Naive thymus-derived CD4-positive, alpha-beta T cell (primary cell): ENCODE measurements at regions of chr2 and their contacts with region 1.

Region 1: DNA sequence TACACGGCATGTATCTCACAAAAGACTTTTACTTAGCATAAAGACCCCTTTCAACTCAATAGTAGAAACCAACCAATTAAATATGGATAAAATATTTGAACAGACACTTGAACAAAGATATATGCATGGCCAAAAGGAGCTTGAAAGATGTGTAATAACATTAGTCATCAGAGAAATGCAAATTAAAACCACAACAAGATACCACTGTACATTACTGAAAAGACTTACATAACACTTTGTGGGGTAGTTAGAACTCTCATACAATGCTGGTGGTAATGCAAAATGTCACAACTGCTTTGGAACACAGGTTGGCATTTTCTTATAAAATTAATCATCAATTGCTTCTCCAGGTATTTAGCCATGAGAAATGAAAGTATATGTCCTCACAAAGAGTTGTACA is 60.7 kb downstream of the TTC27 start:
- DNase-seq: no peak
- ATAC-seq: peak; percentile 53
- H3K4me3 ChIP-seq: no peak overlapping the region
- H3K4me3 Mint-ChIP-seq: no peak overlapping the region
- H3K27ac ChIP-seq: no peak overlapping the region
- H3K27ac Mint-ChIP-seq: no peak overlapping the region
- H3K4me1 ChIP-seq: no peaks in the 10 kb centered on the region
- H3K4me1 Mint-ChIP-seq: peaks cover 0 to 2% (median 0%) of the 10 kb centered on the region in 7 donors
- H3K27me3 ChIP-seq: no peaks in the 10 kb centered on the region
- H3K27me3 Mint-ChIP-seq: no peaks in the 10 kb centered on the region

Region 2: DNA sequence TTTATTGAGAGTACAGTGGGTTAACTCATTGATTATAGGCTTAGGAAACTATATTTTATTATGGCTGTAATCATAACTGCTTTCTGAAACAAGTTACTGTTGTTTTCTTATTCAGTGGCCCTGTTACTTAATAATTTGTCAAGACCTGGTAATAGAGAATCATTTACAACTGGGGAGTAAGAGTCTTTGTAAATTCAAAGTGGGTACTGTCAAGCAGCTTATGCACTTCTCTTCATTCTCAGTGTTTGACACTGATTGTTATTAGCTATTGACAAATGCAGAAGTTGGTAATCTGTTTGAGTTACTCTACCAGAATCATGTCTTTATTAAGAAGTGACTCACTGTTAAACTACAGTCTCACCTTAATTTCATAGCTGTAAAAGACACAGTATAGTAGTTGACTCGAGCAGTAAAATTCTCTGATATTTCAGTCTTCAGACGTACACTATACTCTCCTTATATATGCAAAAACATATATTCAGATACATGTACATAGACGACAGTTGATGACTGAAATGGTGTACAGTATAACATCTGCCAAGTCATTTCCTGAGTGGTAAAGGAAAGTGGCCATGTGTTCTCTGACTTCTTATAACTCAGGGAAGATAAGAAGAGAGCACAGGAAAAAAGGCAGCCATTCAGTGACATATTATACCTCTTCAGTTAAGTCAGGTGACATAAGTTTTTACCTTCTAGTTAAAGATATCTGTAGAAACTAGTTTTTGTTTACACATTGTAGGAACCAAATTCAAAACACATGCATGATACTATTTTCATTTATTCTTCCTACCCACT is 96.6 kb before region 1 on chr2:
- CTCF ChIA-PET with region 1: no interaction called
- POLR2A ChIA-PET with region 1: no interaction called
- intact Hi-C with region 1: no loop called
- DNase-seq: peak in 6 of 9 donors; percentile 5 to 42 (median 25)
- ATAC-seq: peak; percentile 85
- H3K4me3 ChIP-seq: no peak overlapping the region
- H3K4me3 Mint-ChIP-seq: peak overlapping the region in 5 of 10 donors; percentile 8 to 58 (median 28)
- H3K27ac ChIP-seq: no peak overlapping the region
- H3K27ac Mint-ChIP-seq: peak overlapping the region; percentile 47 to 87 (median 72)
- H3K4me1 ChIP-seq: peaks cover 0 to 5% of the 10 kb centered on the region in 2 donors
- H3K4me1 Mint-ChIP-seq: peaks cover 6 to 45% (median 37%) of the 10 kb centered on the region in 7 donors
- H3K27me3 ChIP-seq: no peaks in the 10 kb centered on the region
- H3K27me3 Mint-ChIP-seq: no peaks in the 10 kb centered on the region

Region 3: DNA sequence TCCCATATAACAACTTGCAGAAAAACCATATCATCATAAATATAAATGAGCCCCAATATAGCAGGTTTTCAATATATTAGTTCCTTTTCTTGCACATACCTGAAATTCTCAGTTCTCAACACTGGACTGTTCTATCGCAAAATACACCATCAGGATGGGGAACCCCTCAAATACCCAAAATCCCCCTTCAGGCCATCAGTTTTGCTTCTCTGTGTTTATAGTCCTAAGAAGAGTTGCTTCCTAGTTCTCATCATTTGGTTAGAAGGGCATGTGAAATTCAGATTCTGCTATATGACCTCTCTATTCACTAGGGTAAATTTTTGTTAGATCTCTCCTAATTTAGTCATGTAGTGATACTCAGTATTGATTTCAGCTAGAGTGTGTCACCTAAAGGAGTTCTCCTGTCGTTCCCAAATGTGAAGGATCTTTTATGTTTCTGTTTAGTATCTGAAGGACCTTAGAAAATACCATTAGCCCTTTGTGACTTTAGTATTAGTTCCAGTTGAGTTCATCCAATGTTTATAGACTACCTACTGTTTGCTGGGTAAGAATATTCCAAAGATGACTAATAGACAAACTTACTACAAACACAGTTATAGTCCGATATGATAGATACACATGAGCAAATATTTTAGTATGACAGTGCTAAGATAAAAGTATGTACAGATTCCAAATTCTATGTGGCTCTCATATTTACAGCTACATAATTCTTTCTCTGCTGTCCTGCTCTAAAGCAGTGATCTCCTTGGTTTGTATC is 55.1 kb after region 1 on chr2:
- CTCF ChIA-PET with region 1: interaction called, 12 read pairs
- POLR2A ChIA-PET with region 1: no interaction called
- intact Hi-C with region 1: no loop called
- DNase-seq: no peak
- ATAC-seq: no peak
- H3K4me3 ChIP-seq: no peak overlapping the region
- H3K4me3 Mint-ChIP-seq: no peak overlapping the region
- H3K27ac ChIP-seq: no peak overlapping the region
- H3K27ac Mint-ChIP-seq: no peak overlapping the region
- H3K4me1 ChIP-seq: no peaks in the 10 kb centered on the region
- H3K4me1 Mint-ChIP-seq: no peaks in the 10 kb centered on the region
- H3K27me3 ChIP-seq: no peaks in the 10 kb centered on the region
- H3K27me3 Mint-ChIP-seq: no peaks in the 10 kb centered on the region